Adrenal gland (tissue), 19 donors: ENCODE measurements at regions of chr14 and their contacts with region 1.

Region 1: GRCh38 chr14:94136575-94137331 is 7.3 kb upstream of the IFI27L2 start:
- DNase-seq: peak; percentile 86 to 97 (median 95)
- H3K4me3 ChIP-seq: no peak overlapping the region
- H3K27ac ChIP-seq: no peak overlapping the region
- H3K4me1 ChIP-seq: no peaks in the 10 kb centered on the region
- H3K27me3 ChIP-seq: no peaks in the 10 kb centered on the region
- CTCF ChIP-seq: peak; percentile 92 to 98 (median 96)
- POLR2A ChIP-seq: no peak

Region 2: DNA sequence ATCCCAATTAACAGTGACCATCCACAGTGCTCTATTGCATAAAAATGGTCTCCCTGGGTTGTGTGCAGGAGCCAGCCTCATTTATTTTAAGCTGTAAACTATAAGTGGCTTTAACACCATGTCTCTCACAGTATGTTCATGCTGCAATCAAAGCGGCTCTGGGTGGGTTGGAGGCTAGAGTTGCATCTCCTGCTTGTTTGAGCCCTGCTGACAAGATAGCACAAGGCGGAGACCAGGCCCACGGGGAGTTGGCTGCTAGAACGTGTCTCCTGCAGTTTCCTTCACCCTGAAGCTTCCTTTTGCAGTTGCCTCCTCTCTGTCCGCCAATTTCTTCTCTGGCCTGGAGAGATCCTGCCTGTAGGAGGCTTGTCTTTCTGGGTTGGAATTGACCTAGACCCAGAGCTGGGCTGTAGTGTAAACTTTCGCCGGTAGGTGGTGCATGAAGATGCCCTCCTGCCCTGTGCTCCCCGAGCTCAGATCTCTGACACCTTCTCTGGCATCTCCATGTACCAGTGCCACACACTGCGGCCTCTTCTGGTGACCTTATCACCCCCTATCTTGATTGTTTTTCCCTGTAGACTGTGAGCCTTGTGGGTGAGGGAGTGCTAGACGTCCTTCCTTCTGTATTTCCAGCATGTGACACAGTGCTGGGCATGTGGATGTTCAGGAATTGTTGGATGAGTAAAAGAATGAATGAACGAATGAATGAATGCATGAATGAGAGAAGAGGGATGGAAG is 100.3 kb before region 1 on chr14:
- intact Hi-C with region 1: loop called (anchors 2 to 5 kb)
- DNase-seq: peak; percentile 78 to 93 (median 85)
- H3K4me3 ChIP-seq: no peak overlapping the region
- H3K27ac ChIP-seq: no peak overlapping the region
- H3K4me1 ChIP-seq: peaks cover 0 to 5% of the 10 kb centered on the region in 2 donors
- H3K27me3 ChIP-seq: no peaks in the 10 kb centered on the region
- CTCF ChIP-seq: peak; percentile 80 to 97 (median 93)
- POLR2A ChIP-seq: no peak

Region 3: DNA sequence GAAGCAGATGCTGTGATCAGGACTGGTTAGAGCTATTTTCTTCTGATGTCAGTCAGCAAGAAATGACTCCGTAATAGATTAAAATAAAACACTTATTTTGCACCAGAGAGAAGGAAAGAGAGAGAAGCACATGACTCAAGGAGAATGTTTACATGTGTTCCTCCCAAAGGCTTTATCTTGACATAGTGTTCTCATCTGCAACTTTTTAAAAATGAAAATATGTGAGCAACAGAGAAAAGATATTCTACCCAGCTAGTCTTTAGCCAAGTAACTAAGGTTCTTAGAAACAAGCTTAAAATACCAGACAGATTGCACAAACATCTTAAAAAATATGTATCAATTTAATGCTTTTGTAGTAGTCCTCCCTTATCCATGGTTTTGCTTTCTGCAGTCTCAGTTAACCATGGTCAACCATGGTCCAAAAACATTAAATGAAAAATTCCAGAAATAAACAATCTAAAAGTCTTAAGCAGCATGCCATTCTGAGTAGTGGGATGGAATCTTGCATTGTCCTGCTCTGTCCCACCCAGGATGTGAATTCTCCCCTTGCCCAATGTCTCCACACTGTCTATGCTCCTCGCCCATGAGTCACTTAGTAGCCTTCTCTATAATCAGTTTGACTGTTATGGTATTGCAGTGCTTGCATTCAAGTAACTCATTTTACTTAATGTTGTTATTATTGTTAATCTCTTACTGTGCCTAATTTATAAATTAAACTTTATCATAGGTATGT is 146.4 kb after region 1 on chr14:
- intact Hi-C with region 1: no loop called
- DNase-seq: no peak
- H3K4me3 ChIP-seq: no peak overlapping the region
- H3K27ac ChIP-seq: no peak overlapping the region
- H3K4me1 ChIP-seq: no peaks in the 10 kb centered on the region
- H3K27me3 ChIP-seq: no peaks in the 10 kb centered on the region
- CTCF ChIP-seq: no peak
- POLR2A ChIP-seq: no peak